ENCODE measurements at regions of chr7 and their contacts with region 1.

Region 1: DNA sequence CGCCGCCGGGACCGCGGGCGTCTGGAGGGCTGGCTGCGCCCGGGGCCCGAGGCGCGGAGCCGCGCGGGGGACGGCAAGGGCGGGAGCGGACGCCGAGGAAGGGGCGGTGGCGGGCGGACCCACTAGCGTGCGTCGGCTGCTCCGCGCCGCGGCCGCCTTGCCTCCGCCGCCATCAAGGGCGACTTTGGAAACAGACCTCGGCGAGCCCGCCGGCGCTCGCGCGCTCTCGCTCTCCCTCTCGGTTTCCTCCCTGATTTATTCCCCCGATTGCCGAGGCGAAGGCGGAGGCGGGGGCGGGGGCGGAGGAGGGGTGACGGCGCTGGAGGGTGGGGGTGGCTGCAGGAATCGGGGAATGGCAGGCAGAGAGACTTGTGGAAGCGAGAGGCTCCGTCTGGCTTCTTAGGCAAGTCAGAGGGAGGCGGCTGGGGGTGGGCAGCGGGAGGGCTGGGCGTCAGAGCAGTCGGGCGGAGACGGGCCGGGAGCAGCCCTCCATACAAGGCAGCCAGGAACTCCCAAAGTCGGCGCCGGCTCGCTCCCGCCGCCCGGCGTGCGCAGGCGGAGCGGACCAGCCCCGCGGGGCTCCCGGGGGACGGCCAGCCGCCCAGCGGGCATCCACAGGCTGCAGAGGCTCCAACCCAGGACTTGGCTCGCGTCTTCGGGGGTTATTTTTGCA is at the start of gene CACNA2D1:
- DNase-seq: peak; percentile 83 to 91 (median 87)
- H3K4me3 ChIP-seq: peak within 1 kb of the TSS; percentile 59 to 95 (median 92)
- H3K27ac ChIP-seq: peak within 1 kb of the TSS; percentile 85 to 98 (median 90)
- H3K4me1 ChIP-seq: peaks cover 0 to 25% of the 10 kb centered on the region in 2 donors
- H3K27me3 ChIP-seq: no peaks in the 10 kb centered on the region
- CTCF ChIP-seq: peak in 2 of 6 experiments; percentile 29 to 40
- POLR2A ChIP-seq: peak; percentile 28 to 62
- total RNA-seq, gene CACNA2D1: 18.6 to 60.9 (median 44.4) TPM

Region 2: GRCh38 chr7:82234457-82235049 is 209.1 kb before region 1 on chr7:
- intact Hi-C with region 1: loop called in 1 of 2 experiments (anchors 5 kb)
- DNase-seq: no peak
- H3K4me3 ChIP-seq: no peak overlapping the region
- H3K27ac ChIP-seq: no peak overlapping the region
- H3K4me1 ChIP-seq: no peaks in the 10 kb centered on the region
- H3K27me3 ChIP-seq: no peaks in the 10 kb centered on the region
- CTCF ChIP-seq: peak; percentile 48 to 74 (median 63)
- POLR2A ChIP-seq: no peak

Region 3: DNA sequence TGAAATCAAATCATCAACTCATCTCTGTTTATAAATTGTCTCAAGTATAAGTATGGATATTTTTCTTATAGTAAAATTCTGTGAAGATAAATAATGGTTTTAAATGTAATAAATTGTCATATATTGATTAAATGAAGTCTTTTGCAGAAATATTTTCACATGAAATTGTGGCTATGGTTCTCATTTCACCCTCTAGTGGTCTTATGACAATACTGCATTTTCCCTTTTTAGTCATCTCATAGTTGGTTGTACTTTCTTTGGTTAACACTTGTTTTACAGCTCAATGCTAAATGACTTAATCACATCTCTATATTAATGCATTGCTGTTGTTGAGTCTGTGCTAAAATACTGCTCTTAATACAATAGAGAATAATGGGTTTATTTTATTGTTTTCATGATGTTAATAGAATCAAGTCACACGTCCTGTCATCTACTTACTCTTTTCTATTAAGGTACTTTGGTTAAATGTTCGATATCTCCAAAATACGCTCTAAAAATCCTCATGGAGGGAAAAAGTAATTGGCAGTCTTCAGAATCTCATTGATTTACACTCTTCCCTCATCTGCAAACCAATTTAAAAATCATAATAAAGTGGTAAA is 37.9 kb after region 1 on chr7:
- intact Hi-C with region 1: no loop called
- DNase-seq: no peak
- H3K4me3 ChIP-seq: no peak overlapping the region
- H3K27ac ChIP-seq: no peak overlapping the region
- H3K4me1 ChIP-seq: no peaks in the 10 kb centered on the region
- H3K27me3 ChIP-seq: no peaks in the 10 kb centered on the region
- CTCF ChIP-seq: peak; percentile 68 to 88 (median 82)
- POLR2A ChIP-seq: no peak

Region 4: DNA sequence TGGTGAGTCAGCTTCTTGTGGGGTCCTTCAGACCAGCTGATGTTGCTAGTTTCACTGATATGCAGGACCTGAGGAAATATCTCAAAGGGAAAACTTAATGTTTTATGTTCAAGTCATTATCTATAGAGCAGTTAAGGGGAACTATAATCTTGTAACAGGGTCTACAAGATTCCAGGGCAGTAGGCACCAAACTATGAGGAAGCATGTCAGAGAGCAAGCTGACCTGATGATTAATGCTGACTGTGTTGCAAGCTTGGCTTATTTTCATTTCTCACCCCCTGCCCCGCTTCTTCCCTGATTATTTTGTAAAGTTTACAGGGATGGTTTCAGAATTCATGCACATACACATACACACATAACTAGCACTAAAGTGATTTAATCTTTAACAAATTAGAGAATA is 84.1 kb after region 1 on chr7:
- intact Hi-C with region 1: no loop called
- DNase-seq: no peak
- H3K4me3 ChIP-seq: no peak overlapping the region
- H3K27ac ChIP-seq: no peak overlapping the region
- H3K4me1 ChIP-seq: no peaks in the 10 kb centered on the region
- H3K27me3 ChIP-seq: no peaks in the 10 kb centered on the region
- CTCF ChIP-seq: no peak
- POLR2A ChIP-seq: no peak

Region 5: DNA sequence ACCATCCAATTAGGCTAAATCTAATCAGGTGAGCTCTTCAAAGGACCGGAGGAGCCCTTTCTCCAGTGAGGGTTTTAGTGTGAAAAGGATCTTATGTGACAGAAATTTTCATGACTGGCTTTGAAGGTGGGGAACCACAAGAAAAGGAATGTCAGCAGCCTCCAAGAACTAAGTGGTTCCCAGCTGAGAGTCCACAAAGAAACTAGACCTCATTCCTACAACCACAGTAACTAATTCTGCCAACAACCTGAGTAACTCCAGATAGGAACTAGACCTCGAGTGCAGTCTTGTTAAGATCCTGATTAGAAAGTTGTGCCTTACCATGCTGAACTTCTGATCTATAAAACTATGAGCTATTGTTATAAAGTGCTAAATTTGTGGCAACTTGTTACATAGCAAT is 667.7 kb after region 1 on chr7:
- intact Hi-C with region 1: no loop called
- DNase-seq: no peak
- H3K4me3 ChIP-seq: no peak overlapping the region
- H3K27ac ChIP-seq: no peak overlapping the region
- H3K4me1 ChIP-seq: no peaks in the 10 kb centered on the region
- H3K27me3 ChIP-seq: no peaks in the 10 kb centered on the region
- CTCF ChIP-seq: no peak
- POLR2A ChIP-seq: no peak

Region 6: DNA sequence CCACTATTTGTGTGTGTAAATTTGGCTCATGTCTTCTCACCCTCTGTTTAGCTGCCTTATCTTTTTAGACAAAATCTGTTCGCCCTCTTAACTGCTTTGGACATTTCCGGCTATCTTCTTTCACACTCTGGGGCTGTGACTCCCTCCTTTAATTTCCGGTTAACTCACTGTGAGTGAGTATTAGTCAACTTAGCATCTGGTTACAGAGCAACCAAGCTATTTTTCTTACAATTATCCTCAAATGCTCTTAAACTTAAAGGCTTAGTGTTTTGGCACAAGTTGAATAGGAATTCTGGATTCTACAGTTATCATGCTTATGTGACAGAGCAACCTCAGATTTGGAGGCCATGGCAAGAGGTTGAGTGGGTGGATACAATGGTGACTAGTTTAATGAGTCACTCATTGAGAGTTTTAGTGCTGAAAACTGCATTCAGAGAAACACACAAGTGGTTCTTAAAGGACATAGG is 1928.5 kb after region 1 on chr7:
- intact Hi-C with region 1: no loop called
- DNase-seq: no peak
- H3K4me3 ChIP-seq: no peak overlapping the region
- H3K27ac ChIP-seq: no peak overlapping the region
- H3K4me1 ChIP-seq: no peaks in the 10 kb centered on the region
- H3K27me3 ChIP-seq: no peaks in the 10 kb centered on the region
- CTCF ChIP-seq: no peak
- POLR2A ChIP-seq: no peak